ENCODE measurements at regions of chr9 and their contacts with region 1.

Region 1: DNA sequence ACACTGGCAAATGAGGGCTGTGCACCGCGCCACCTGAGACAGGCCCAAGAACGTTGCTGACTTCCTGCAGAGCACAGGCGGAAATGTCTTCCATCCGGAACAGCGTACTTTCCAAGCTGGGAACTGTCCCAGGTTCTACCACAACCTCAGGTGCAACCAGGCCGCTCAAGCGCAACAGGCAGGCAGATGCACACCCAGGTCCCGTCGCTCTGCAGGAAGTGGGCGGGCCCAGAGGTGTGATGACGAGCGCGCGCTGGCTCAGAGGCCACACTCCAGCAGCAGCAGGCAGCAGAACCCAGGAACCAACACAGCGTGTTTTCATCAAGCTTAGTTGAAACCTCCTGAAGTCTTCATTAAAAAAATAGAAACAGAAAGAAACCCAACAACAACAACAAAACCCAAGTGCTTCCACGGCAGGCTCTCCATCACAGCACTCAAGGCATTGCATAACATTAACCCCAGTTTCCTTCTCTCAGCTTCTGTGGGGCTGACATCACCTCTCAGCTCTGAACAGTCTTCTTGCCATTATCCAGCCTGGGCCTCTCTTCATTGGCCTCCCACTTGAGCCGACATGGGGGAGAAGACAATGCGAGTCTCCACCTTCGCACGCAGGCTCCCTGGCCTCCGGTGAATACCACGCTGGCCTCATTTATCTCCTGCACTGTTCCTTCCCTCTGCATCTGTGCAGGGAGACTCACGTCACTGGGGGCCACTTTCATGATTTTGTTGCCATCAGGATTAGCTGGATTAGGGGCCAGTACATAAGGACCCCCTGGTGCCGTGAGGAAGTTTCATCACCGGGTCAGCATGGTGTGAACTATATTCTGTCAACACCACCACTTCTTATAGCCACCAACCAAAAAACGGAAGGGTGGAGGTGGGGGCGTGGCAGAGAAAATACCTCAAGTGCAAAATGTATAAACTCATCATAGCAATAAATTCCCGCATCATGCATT is 22.1 kb downstream of the PTCH1 start:
- DNase-seq: peak; percentile 90
- ATAC-seq: peak; percentile 98
- H3K4me3 Mint-ChIP-seq: peak overlapping the region; percentile 74
- H3K27ac Mint-ChIP-seq: peak overlapping the region; percentile 95
- H3K4me1 Mint-ChIP-seq: peaks cover 67% of the 10 kb centered on the region
- H3K27me3 Mint-ChIP-seq: no peaks in the 10 kb centered on the region
- CTCF ChIP-seq: no peak

Region 2: DNA sequence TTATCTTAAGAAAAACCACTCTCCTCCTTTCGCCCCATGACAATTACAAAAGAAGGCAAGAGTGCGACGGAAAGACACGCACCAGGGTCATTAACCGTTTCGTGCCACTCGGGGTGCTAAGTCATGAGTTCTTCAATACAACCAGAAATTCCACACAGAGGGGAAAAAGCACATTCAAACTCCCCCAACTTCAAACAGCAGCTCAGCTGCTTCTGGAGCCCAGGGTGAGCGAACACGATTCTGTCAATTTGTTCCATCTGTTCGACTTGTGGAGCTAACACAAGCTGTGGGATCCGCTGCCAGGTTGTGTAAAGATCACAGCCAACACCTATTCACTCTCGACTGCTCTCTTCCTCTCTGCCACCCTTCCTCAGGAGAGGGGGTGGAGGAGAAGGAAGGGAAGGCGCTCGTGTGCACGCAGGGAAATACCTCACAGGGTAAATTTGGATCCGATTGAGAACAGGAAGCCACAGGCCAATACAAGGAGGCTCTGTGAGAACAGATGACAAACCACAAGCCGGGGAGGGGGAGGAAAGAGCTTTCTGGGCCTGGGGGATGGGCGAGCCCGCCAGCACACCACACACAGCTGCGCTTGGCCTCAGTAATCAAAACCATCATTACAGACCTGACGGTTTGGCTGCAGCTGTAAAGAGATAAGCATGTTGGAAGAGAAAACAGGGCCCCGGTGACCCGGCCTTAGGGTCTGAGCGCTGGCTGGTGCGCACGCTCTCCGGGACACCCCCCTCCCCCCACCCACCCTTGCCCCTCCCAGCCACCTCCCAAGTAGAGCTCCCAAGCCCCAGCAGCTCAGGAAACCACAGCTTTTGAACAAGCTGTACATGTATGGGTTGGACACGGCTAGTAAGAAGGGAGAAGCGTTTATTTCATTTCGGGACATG is 32.2 kb before region 1 on chr9:
- CTCF ChIA-PET with region 1: interaction called, 3 read pairs
- POLR2A ChIA-PET with region 1: interaction called, 10 read pairs
- intact Hi-C with region 1: no loop called
- DNase-seq: peak; percentile 90
- ATAC-seq: peak; percentile 92
- H3K4me3 Mint-ChIP-seq: peak overlapping the region; percentile 65
- H3K27ac Mint-ChIP-seq: peak overlapping the region; percentile 81
- H3K4me1 Mint-ChIP-seq: peaks cover 30% of the 10 kb centered on the region
- H3K27me3 Mint-ChIP-seq: peaks cover 1% of the 10 kb centered on the region
- CTCF ChIP-seq: no peak

Region 3: GRCh38 chr9:95570150-95570549 is 75.5 kb after region 1 on chr9:
- CTCF ChIA-PET with region 1: no interaction called
- POLR2A ChIA-PET with region 1: no interaction called
- intact Hi-C with region 1: no loop called
- DNase-seq: no peak
- ATAC-seq: no peak
- H3K4me3 Mint-ChIP-seq: no peak overlapping the region
- H3K27ac Mint-ChIP-seq: no peak overlapping the region
- H3K4me1 Mint-ChIP-seq: peaks cover 14% of the 10 kb centered on the region
- H3K27me3 Mint-ChIP-seq: peaks cover 39% of the 10 kb centered on the region
- CTCF ChIP-seq: no peak